ENCODE measurements at regions of chr6 and their contacts with region 1.

Region 1: DNA sequence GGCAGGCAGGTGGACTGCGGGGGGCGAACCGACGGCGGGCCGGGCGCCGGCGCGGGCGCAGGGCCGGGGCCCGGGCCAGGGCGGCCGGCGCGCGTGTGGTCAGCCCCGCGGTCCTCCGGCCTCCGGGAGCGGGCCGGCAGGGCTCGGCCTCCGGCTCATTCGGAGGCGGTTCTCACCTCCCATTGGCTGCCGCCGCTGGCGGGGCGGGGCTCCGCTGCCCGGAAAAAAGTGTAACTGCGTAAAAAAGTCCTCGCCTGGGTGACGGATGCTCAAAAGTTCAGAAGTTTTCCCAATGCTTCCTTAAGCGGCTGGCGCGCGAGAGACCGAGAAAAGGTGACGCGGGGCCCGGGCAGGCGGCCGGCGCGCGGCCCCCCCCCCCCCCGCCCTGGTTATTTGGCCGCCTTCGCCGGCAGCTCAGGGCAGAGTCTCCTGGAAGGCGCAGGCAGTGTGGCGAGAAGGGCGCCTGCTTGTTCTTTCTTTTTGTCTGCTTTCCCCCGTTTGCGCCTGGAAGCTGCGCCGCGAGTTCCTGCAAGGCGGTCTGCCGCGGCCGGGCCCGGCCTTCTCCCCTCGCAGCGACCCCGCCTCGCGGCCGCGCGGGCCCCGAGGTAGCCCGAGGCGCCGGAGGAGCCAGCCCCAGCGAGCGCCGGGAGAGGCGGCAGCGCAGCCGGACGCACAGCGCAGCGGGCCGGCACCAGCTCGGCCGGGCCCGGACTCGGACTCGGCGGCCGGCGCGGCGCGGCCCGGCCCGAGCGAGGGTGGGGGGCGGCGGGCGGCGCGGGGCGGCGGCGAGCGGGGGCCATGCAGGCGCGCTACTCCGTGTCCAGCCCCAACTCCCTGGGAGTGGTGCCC is at the start of gene FOXC1:
- DNase-seq: peak; percentile 65
- H3K4me3 Mint-ChIP-seq: peak within 1 kb of the TSS; percentile 59
- H3K27ac Mint-ChIP-seq: no peak within 1 kb of the TSS
- H3K4me1 Mint-ChIP-seq: peaks cover 50% of the 10 kb centered on the region
- H3K27me3 Mint-ChIP-seq: peaks cover 61% of the 10 kb centered on the region
- total RNA-seq, gene FOXC1: 0.05 to 0.07 TPM

Region 2: DNA sequence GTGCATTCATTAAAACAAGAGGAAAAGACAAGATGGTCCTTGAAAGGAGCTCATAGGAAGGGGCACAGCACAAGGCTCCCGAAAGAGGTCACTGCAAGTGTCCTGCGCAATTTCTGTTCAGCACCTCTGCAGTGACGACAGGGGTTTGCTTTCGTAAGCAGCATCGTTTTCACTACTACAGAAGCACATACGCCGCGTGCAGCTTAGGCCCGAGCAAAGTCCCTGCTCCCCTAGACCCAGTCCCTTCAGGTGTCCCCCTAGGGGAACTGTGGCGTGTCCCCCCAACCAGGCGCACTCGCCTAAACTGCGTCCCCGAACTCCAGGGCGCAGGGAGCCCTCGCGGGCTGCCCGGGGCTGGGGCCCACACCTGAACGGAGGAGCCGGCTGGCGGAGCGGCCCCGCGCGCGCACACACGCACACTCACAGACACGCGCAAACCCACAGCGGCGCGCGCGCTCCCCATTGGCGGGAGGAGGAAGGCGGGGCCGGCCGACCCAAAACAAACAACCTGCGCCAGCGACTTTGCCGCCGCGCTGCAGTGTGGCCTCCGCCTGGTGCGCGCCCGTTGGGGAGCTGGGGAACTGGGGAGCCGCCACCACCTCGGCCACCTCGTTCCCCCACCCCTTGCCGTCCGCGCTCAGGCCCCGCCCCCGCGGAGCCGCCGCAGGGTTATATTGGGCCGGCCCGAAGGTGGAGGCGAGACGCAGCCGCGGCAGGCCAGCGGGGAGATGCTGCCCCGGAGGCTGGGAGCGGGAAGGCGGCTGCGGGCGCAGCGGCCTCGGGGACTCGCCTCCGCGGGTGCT is 298.3 kb before region 1 on chr6 and contains the start of gene FOXQ1:
- CTCF ChIA-PET with region 1: no interaction called
- POLR2A ChIA-PET with region 1: no interaction called
- intact Hi-C with region 1: loop called (anchors 5 kb)
- DNase-seq: peak; percentile 16
- H3K4me3 Mint-ChIP-seq: peak within 1 kb of the TSS; percentile 49
- H3K27ac Mint-ChIP-seq: no peak within 1 kb of the TSS
- H3K4me1 Mint-ChIP-seq: peaks cover 30% of the 10 kb centered on the region
- H3K27me3 Mint-ChIP-seq: peaks cover 61% of the 10 kb centered on the region
- total RNA-seq, gene FOXQ1: not detected

Region 3: DNA sequence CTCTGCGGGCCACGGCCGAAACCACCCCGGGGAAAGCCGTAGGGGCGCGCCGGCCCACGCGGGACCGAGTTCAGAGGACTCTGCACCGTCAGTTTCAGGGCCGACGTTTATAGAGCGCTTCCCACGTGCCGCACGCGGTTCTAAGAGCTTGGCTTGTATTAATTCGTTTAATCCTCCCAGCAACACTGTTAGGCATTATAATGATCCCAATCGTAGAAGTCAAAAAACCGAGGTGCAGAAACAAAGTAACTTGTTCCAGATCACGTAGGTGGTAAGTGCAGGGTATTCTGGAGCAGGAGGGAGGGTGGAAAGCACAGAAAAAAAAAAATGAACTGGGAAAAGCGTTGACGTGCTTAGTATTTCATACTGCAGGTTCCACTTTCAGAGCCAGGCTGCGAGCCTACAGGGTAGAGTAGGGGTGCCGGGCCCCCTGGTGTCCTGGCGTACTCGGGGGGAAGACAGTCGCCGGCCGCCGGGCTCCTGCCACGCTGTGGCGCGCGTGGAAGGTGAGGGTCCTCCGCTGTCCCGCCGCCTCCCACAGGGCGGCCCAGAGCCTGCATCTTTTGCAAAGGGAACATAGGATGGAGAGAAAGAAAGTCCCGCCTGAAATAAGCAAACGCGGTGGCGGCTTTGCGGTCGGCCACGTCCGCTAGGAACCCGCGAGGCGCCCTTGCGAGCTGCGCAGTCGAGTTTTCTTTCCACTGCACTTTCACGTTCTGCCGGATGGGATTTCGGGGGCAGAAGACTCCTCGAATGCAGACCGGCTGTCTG is 230.7 kb before region 1 on chr6:
- CTCF ChIA-PET with region 1: no interaction called
- POLR2A ChIA-PET with region 1: no interaction called
- intact Hi-C with region 1: no loop called
- DNase-seq: peak; percentile 49
- H3K4me3 Mint-ChIP-seq: peak overlapping the region; percentile 4
- H3K27ac Mint-ChIP-seq: no peak overlapping the region
- H3K4me1 Mint-ChIP-seq: peaks cover 27% of the 10 kb centered on the region
- H3K27me3 Mint-ChIP-seq: peaks cover 63% of the 10 kb centered on the region

Region 4: DNA sequence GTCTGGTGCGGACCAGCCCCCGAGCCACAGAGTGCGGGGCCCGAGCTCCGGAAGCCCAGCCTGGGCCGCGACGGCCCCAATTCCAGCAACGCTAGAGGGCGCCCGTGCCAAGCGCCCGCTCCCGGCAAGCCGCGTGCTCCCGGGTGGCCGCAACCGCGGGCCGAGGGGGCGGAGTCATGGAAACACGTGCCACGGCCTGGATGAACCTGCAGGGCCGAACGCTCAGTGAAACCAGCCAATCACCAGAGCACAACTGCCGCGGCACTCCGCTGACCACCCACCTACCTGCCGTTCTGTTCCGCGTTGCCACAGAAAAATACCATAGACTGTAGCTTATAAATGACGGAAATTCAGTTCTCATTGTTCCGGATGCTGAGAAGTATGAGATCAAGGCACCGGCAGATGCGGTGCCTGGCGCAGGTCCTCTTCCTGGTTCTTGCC is 85.8 kb before region 1 on chr6:
- CTCF ChIA-PET with region 1: no interaction called
- POLR2A ChIA-PET with region 1: no interaction called
- intact Hi-C with region 1: loop called (anchors 10 kb)
- DNase-seq: peak; percentile 87
- H3K4me3 Mint-ChIP-seq: peak overlapping the region; percentile 42
- H3K27ac Mint-ChIP-seq: peak overlapping the region; percentile 40
- H3K4me1 Mint-ChIP-seq: peaks cover 36% of the 10 kb centered on the region
- H3K27me3 Mint-ChIP-seq: peaks cover 10% of the 10 kb centered on the region

Region 5: DNA sequence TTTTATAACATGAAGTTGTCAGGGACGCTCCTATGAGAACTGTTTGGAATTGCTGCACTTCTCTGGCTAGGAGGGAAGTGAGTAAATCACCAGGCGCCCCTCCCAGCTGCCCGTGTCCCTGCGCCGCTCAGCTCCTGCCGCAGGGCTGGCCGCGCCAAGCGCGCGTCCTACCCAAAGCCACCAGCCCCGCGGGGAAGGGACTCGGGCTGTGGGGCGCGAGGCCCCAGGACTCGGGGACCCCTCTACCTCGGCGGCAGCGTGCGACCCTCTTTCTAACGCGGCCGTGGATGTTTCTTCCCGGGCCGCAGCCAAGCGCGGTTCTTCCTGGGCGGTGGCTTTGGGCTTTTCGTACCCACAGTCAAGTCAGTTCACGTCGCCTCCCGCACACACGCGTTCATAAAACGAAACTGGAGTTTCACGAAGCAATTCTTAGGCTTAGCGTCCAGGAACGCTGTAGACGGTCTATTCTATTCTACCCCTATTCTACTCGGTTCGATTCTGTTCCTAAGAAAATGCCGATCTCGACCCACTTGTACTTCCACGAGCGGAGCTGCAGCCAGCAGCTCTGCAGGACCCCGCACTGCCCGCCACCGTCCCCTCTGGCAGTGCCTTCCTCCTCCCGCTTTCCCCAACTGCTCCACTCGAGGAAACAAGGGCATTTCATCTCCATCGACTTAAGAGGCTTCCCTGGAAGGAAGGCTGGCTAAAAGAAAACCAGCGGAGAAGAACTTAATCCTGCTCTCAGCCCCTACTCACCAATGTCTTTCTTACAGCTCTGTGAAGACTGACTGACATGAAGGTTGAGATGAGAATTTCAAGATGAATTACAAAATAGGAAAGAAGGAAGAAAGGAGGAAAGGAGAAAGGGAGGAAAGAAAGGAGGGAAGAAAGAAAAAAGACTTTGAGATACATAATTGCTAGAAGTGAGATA is 15.2 kb after region 1 on chr6:
- CTCF ChIA-PET with region 1: interaction called, 4 read pairs
- POLR2A ChIA-PET with region 1: interaction called, 3 read pairs
- intact Hi-C with region 1: loop called (anchors 2 kb)
- DNase-seq: no peak
- H3K4me3 Mint-ChIP-seq: peak overlapping the region; percentile 49
- H3K27ac Mint-ChIP-seq: no peak overlapping the region
- H3K4me1 Mint-ChIP-seq: peaks cover 11% of the 10 kb centered on the region
- H3K27me3 Mint-ChIP-seq: peaks cover 52% of the 10 kb centered on the region

Region 6: DNA sequence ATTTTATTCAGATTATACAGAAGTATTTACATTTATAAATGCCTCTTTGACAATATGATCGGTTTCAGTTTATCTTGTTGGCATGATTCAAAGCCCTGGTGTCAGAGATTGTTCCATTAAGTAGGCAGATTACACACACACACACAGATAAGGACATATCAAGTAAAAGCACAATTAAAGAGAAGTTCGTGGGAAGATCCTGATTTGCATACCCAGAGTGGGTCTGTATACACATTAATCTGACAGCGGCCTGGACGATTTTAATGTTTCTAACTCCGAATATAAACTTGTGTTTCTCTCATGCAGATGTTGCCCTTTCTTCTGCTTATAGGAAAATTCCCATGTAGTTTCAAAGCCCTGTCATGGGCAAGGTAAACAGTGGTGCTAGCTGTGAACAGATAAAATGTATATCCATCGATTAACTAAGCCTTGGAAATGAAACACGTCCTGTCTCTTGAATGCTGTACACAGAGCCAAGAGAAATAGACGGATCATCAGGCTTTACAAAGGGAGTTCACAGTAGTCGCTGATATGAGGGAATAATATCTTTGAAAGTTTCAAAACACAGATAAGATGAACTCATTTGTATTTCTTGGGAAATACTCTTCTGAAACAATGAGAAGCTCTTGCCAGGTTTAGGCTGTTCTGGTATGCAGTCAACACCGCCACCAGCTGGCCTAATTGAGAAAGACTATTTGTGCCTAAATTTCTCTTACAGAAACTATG is 743.7 kb after region 1 on chr6:
- CTCF ChIA-PET with region 1: interaction called, 14 read pairs
- POLR2A ChIA-PET with region 1: no interaction called
- intact Hi-C with region 1: no loop called
- DNase-seq: peak; percentile 70
- H3K4me3 Mint-ChIP-seq: no peak overlapping the region
- H3K27ac Mint-ChIP-seq: no peak overlapping the region
- H3K4me1 Mint-ChIP-seq: no peaks in the 10 kb centered on the region
- H3K27me3 Mint-ChIP-seq: no peaks in the 10 kb centered on the region